ENCODE measurements at regions of chr2 and their contacts with region 1.

Region 1: GRCh38 chr2:47272031-47272864 is 117.1 kb upstream of the STPG4 start:
- DNase-seq: peak; percentile 98
- H3K4me3 ChIP-seq: peak overlapping the region in 1 of 2 experiments; percentile 35; a peak in 3 of 4 replicates
- H3K27ac ChIP-seq: peak overlapping the region; percentile 44 to 84; a peak in 3 of 4 replicates
- H3K4me1 ChIP-seq: peaks cover 16 to 30% of the 10 kb centered on the region in 2 experiments; a peak in 3 of 4 replicates
- H3K27me3 ChIP-seq: no peaks in the 10 kb centered on the region
- CTCF ChIP-seq: peak; percentile 99
- EP300 ChIP-seq: no peak; a peak in 1 of 4 replicates
- RAD21 ChIP-seq: peak; percentile 89

Region 2: GRCh38 chr2:46857893-46858701 is 414.2 kb before region 1 on chr2:
- CTCF ChIA-PET with region 1: no interaction called
- POLR2A ChIA-PET with region 1: no interaction called
- DNase-seq: no peak
- H3K4me3 ChIP-seq: no peak overlapping the region
- H3K27ac ChIP-seq: peak overlapping the region; percentile 29 to 99; a peak in 3 of 4 replicates
- H3K4me1 ChIP-seq: peaks cover 17 to 48% of the 10 kb centered on the region in 2 experiments; a peak in 3 of 4 replicates
- H3K27me3 ChIP-seq: no peaks in the 10 kb centered on the region
- CTCF ChIP-seq: no peak
- EP300 ChIP-seq: peak in 1 of 2 experiments; percentile 88; a peak in 1 of 4 replicates
- RAD21 ChIP-seq: no peak

Region 3: GRCh38 chr2:47088668-47089462 is 183.4 kb before region 1 on chr2:
- CTCF ChIA-PET with region 1: interaction called, 18 read pairs
- POLR2A ChIA-PET with region 1: no interaction called
- DNase-seq: peak; percentile 87
- H3K4me3 ChIP-seq: no peak overlapping the region
- H3K27ac ChIP-seq: peak overlapping the region; percentile 77 to 100
- H3K4me1 ChIP-seq: peaks cover 18 to 85% of the 10 kb centered on the region in 2 experiments
- H3K27me3 ChIP-seq: no peaks in the 10 kb centered on the region
- CTCF ChIP-seq: 0 out of 2 replicates have a peak, but pooled peaks have one; percentile 5
- EP300 ChIP-seq: peak in 1 of 2 experiments; percentile 100; a peak in 2 of 4 replicates
- RAD21 ChIP-seq: peak; percentile 0; the same call in 1 of the 2 replicates

Region 4: DNA sequence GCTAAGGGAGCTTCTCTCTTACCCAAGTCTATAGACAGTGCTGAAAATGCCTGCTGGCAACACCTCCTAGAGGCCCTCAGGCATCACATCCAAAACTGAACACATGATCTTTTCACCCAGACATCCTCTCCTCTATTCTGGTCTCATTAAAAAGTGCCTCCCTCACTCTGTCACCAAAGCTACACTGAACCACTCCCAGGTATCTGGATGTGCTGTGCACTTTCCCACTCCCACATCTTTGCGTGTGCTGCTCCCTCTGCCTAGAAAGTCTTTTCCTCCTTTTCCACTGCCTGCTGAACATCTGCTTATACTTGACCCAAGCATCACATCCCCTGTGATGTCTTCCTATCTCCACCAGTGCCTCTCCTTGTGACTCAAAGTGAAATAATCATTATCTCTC is 91.1 kb before region 1 on chr2:
- CTCF ChIA-PET with region 1: interaction called, 18 read pairs
- POLR2A ChIA-PET with region 1: no interaction called
- DNase-seq: no peak
- H3K4me3 ChIP-seq: no peak overlapping the region
- H3K27ac ChIP-seq: no peak overlapping the region
- H3K4me1 ChIP-seq: peaks cover 8 to 10% of the 10 kb centered on the region in 2 experiments; a peak in 3 of 4 replicates
- H3K27me3 ChIP-seq: no peaks in the 10 kb centered on the region
- CTCF ChIP-seq: no peak
- EP300 ChIP-seq: no peak
- RAD21 ChIP-seq: no peak

Region 5: DNA sequence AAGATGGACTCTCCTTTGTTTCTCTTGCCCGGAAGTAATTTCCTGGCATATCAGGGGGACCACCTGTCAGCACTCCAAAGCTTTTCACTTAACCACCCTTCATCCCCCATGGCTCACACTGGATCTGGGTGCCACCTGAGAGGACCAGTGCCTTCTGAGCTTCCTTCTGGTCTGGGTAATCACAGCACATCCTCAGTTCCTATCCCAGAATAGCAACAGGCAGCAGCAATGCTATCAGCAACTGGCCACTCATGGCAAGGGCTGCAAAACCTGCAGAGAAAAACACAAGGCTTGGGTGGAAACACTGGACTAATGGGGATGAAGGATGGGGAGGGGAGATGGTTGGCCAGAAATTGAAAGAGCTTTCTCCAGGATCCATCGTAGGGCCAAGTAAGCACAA is 57.3 kb before region 1 on chr2:
- CTCF ChIA-PET with region 1: interaction called, 10 read pairs
- POLR2A ChIA-PET with region 1: no interaction called
- DNase-seq: no peak
- H3K4me3 ChIP-seq: no peak overlapping the region
- H3K27ac ChIP-seq: no peak overlapping the region
- H3K4me1 ChIP-seq: peaks cover 0 to 10% of the 10 kb centered on the region in 2 experiments; a peak in 2 of 4 replicates
- H3K27me3 ChIP-seq: no peaks in the 10 kb centered on the region
- CTCF ChIP-seq: no peak
- EP300 ChIP-seq: no peak
- RAD21 ChIP-seq: no peak

Region 6: DNA sequence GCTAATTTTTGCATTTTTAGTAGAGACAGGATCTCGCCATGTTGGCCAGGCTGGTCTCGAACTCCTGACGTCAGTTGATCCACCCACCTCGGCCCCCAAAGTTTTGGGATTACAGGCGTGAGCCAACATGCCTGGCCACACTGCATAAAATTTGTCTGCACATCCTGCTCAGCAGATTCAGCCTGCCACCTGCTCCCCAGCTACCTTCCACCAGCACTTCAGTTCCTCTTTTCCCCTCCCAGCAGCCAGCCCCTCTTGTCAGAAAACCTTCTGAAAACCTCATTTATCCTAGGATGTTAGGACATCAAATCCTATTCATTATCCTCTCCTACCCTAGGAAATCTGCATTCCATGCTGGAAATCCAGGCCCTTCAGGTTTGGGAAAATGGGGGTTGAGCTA is 17.8 kb before region 1 on chr2:
- CTCF ChIA-PET with region 1: interaction called, 13 read pairs
- POLR2A ChIA-PET with region 1: no interaction called
- DNase-seq: no peak
- H3K4me3 ChIP-seq: no peak overlapping the region
- H3K27ac ChIP-seq: no peak overlapping the region
- H3K4me1 ChIP-seq: peaks cover 5 to 12% of the 10 kb centered on the region in 2 experiments; a peak in 2 of 4 replicates
- H3K27me3 ChIP-seq: no peaks in the 10 kb centered on the region
- CTCF ChIP-seq: no peak
- EP300 ChIP-seq: no peak
- RAD21 ChIP-seq: no peak

Region 7: DNA sequence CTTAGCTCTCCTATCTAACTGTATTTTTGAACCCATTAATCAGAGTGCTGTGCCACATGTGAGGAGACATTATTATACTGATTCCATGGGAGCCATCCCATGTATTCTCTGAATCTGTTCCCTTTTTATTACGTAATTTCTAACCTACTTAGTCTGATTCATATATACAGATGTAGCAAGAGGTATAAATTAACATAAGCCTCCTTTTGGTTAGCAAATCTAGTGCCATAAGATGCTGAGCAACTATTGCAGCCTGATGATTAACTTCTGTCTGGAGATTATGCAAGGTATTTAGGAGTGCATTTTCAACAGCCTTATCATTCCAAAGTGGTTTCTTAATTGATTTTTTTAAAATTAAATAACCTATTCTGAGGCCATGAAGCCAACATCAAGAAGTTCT is 16.6 kb after region 1 on chr2:
- CTCF ChIA-PET with region 1: interaction called, 31 read pairs
- POLR2A ChIA-PET with region 1: no interaction called
- DNase-seq: no peak
- H3K4me3 ChIP-seq: no peak overlapping the region
- H3K27ac ChIP-seq: no peak overlapping the region
- H3K4me1 ChIP-seq: peaks cover 5 to 9% of the 10 kb centered on the region in 2 experiments; a peak in 2 of 4 replicates
- H3K27me3 ChIP-seq: no peaks in the 10 kb centered on the region
- CTCF ChIP-seq: no peak
- EP300 ChIP-seq: no peak
- RAD21 ChIP-seq: no peak

Region 8: DNA sequence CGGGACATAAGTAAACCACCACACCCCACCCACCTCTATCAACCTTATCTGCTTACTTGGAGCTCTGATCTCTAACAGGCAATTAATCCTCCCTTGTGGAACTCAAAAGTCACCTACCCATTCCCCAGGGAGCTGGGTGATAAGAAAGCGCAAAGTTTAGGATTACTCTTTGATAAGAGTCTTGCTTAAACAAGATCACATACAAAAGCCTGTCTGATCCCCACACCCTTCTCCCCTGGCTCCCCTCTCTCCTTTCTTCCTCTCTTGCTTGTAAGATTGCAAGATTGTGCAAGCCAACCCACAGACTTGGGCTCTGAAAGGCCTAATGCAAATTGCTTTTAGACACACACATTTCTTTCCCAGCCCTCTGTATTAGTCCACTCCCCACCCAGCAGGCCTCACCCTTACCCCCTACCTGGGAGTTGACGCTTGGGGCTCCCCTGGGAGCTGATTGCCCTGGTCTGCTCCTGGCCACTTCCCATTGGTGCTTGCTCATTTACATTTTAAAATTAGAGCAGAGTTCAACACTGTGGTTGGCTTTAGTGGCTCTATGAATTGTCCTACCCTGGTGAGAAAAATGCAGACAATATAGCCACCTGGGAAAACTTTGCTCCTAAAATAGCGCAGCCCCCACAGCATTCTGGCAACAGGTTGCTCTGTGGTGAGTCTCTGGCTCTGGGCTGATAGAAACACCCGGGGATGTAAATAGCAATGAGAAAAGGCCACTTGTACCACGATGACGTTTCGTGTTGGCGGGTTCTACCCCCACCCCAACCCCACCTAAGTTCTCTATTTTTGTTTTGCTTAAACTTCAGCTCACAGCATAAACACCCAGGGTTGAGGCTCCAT is 37.9 kb after region 1 on chr2:
- CTCF ChIA-PET with region 1: interaction called, 12 read pairs
- POLR2A ChIA-PET with region 1: no interaction called
- DNase-seq: no peak
- H3K4me3 ChIP-seq: no peak overlapping the region
- H3K27ac ChIP-seq: peak overlapping the region in 1 of 2 experiments; percentile 87; a peak in 1 of 4 replicates
- H3K4me1 ChIP-seq: peaks cover 0 to 38% of the 10 kb centered on the region in 2 experiments; a peak in 3 of 4 replicates
- H3K27me3 ChIP-seq: no peaks in the 10 kb centered on the region
- CTCF ChIP-seq: no peak
- EP300 ChIP-seq: no peak
- RAD21 ChIP-seq: no peak

Region 9: GRCh38 chr2:47357483-47357882 is 85.2 kb after region 1 on chr2:
- CTCF ChIA-PET with region 1: no interaction called
- POLR2A ChIA-PET with region 1: no interaction called
- DNase-seq: no peak
- H3K4me3 ChIP-seq: no peak overlapping the region
- H3K27ac ChIP-seq: peak overlapping the region in 1 of 2 experiments; percentile 69; a peak in 2 of 4 replicates
- H3K4me1 ChIP-seq: peaks cover 0 to 34% of the 10 kb centered on the region in 2 experiments; a peak in 2 of 4 replicates
- H3K27me3 ChIP-seq: no peaks in the 10 kb centered on the region
- CTCF ChIP-seq: no peak
- EP300 ChIP-seq: no peak
- RAD21 ChIP-seq: no peak